Naive thymus-derived CD4-positive, alpha-beta T cell (primary cell): ENCODE measurements at regions of chr17 and their contacts with region 1.

Region 1: DNA sequence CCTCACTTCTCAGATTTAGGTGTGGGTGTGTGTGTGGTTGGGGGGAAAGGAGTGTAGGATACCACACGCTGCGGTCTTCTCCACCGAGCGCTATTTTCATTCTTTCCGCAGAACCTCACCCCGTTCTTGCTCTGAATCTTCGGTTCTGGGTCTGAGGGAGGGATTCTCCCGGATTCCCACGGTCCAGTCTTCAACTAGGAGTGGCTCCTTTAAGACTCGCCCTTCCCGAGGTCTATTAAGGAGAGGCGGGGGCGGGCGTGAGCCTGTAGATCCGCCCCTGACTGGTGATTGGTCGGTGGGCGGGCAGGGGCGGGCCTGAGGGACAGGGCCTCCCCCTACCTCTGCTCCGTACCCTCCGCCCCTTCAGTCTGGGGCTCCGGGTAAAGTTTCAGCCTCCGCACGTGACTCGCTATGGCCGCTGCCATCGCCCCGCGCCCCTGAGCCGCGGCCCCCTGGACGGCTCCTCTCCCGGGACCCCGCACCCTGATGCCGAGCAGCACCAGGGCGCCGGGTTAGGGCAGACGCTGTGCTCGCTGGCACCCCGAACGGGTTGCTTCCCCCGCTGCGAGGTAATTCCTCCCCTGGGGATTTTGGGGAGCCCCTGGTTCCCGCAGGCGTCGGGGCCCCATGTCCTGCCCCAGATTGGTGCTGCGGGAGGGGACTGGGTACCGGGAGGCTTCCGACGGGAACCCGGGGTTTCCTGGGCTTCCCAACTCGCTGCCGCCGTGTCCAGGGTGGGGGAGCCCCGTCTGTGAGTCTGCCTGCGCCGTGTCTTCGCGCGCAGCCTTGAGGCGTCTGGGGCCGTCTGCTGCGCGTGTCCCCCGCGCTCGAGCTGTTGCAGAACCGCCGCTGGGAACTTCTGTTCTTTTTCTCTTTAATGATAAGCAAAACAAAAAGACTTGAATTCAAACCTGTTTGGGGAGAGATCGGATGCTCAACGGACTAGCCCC is 9.2 kb downstream of the RARA start:
- DNase-seq: peak; percentile 81 to 91 (median 90)
- ATAC-seq: peak; percentile 76
- H3K4me3 ChIP-seq: peak overlapping the region; percentile 55
- H3K4me3 Mint-ChIP-seq: peak overlapping the region; percentile 89 to 98 (median 97)
- H3K27ac ChIP-seq: peak overlapping the region; percentile 96
- H3K27ac Mint-ChIP-seq: peak overlapping the region; percentile 98 to 100 (median 99)
- H3K4me1 ChIP-seq: peaks cover 49 to 68% of the 10 kb centered on the region in 2 donors
- H3K4me1 Mint-ChIP-seq: peaks cover 32 to 88% (median 74%) of the 10 kb centered on the region in 7 donors
- H3K27me3 ChIP-seq: no peaks in the 10 kb centered on the region
- H3K27me3 Mint-ChIP-seq: peaks cover 0 to 8% (median 0%) of the 10 kb centered on the region in 5 donors

Region 2: GRCh38 chr17:40121181-40122135 is 196.7 kb before region 1 on chr17 and contains the start of gene MSL1:
- CTCF ChIA-PET with region 1: no interaction called
- POLR2A ChIA-PET with region 1: no interaction called
- intact Hi-C with region 1: loop called in 1 of 2 experiments (anchors 5 kb)
- DNase-seq: peak; percentile 81 to 95 (median 86)
- ATAC-seq: peak; percentile 82
- H3K4me3 ChIP-seq: peak within 1 kb of the TSS; percentile 86
- H3K4me3 Mint-ChIP-seq: peak within 1 kb of the TSS; percentile 65 to 99 (median 86)
- H3K27ac ChIP-seq: peak within 1 kb of the TSS; percentile 82
- H3K27ac Mint-ChIP-seq: peak within 1 kb of the TSS; percentile 38 to 97 (median 84)
- H3K4me1 ChIP-seq: peaks cover 12 to 16% of the 10 kb centered on the region in 2 donors
- H3K4me1 Mint-ChIP-seq: peaks cover 32 to 47% (median 38%) of the 10 kb centered on the region in 7 donors
- H3K27me3 ChIP-seq: no peaks in the 10 kb centered on the region
- H3K27me3 Mint-ChIP-seq: no peaks in the 10 kb centered on the region
- total RNA-seq, gene MSL1: 97.0 to 145 (median 113) TPM

Region 3: DNA sequence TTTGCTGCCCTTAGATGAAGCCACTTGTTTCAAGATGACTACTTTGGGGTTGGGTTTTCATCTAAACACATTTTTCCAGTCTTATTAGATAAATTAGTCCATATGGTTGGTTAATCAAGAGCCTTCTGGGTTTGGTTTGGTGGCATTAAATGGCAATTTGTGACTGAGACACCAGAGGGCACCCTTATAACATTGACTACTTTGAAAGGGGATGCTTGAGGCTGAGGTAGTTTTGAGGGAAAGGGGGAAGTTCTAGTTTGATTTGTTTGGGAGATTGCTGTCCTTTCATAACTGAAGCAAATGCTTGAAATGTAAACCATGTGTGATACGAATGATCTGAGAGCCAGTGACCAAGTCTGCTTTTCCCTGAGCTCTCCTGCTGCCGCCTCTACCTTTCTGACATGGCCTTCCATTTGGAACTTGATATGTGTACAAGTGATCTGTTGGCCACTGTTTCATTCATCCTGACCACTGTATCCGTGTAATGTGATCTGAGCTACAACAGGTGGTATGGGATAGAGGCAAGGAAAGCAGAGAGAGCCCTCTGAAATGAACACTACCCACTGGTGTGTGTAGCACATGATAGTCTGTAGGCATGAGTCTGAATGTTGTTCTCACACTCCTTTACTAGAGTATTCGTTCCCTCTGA is 15.0 kb before region 1 on chr17:
- CTCF ChIA-PET with region 1: interaction called, 13 read pairs
- POLR2A ChIA-PET with region 1: interaction called, 742 read pairs
- intact Hi-C with region 1: loop called (anchors 1 kb)
- DNase-seq: peak in 7 of 9 donors; percentile 43 to 70 (median 64)
- ATAC-seq: peak; percentile 86
- H3K4me3 ChIP-seq: no peak overlapping the region
- H3K4me3 Mint-ChIP-seq: peak overlapping the region in 2 of 10 donors; percentile 8 to 44
- H3K27ac ChIP-seq: no peak overlapping the region
- H3K27ac Mint-ChIP-seq: peak overlapping the region in 7 of 9 donors; percentile 3 to 34 (median 19)
- H3K4me1 ChIP-seq: peaks cover 13 to 28% of the 10 kb centered on the region in 2 donors
- H3K4me1 Mint-ChIP-seq: peaks cover 11 to 21% (median 15%) of the 10 kb centered on the region in 7 donors
- H3K27me3 ChIP-seq: no peaks in the 10 kb centered on the region
- H3K27me3 Mint-ChIP-seq: no peaks in the 10 kb centered on the region

Region 4: DNA sequence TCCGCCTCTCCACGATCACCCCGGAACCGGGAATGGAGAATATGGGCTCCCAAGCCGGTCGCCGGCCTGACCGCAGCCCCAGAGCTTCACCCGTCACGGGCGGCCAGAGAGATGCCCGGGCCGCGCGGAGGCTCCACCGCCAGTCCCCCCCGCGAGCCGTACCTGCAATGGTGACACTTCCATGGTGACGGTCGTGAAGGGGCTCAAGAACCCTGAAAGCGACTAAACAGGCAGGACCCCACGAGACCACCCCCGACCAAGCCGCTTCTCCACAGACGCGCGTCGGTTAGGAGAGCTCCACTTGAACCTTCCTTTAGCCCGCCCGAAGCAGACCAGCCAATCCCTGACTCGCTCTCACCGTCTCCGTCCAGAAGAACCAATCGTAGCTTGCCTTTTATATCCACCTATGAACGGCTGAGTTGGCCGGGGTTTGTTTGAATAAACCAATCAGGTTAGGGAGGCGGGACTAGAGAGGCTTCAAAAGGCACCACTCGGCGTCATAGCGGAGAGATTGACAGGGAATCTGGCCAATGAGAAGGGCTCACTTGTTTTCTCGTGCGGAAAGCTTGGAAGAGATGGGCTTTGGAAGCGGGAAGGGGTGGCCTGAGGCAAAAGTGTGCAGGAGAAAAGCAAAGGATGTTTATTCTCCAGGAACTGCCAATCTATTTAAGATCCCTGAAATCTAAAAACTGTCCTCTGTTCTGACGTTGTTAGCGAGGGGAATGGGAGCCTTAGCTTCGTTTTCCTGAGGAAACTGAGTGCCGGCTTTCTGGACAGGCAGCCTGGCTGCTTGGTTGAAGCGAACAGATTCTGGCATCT is 99.7 kb after region 1 on chr17 and contains the start of gene TOP2A:
- CTCF ChIA-PET with region 1: no interaction called
- POLR2A ChIA-PET with region 1: no interaction called
- intact Hi-C with region 1: loop called in 1 of 2 experiments (anchors 5 kb)
- DNase-seq: peak; percentile 92 to 98 (median 98)
- ATAC-seq: peak; percentile 100
- H3K4me3 ChIP-seq: peak within 1 kb of the TSS; percentile 96
- H3K4me3 Mint-ChIP-seq: peak within 1 kb of the TSS; percentile 87 to 99 (median 92)
- H3K27ac ChIP-seq: peak within 1 kb of the TSS; percentile 71
- H3K27ac Mint-ChIP-seq: peak within 1 kb of the TSS; percentile 75 to 97 (median 90)
- H3K4me1 ChIP-seq: peaks cover 0 to 16% of the 10 kb centered on the region in 2 donors
- H3K4me1 Mint-ChIP-seq: peaks cover 6 to 41% (median 23%) of the 10 kb centered on the region in 7 donors
- H3K27me3 ChIP-seq: peaks cover 0 to 5% of the 10 kb centered on the region in 2 donors
- H3K27me3 Mint-ChIP-seq: peaks cover 0 to 2% (median 0%) of the 10 kb centered on the region in 5 donors
- total RNA-seq, gene TOP2A: 0.54 to 273 (median 1.2) TPM

Region 5: GRCh38 chr17:40564883-40565768 is 247.0 kb after region 1 on chr17 and contains the start of gene CCR7:
- CTCF ChIA-PET with region 1: interaction called, 3 read pairs
- POLR2A ChIA-PET with region 1: interaction called, 9 read pairs
- intact Hi-C with region 1: loop called in 1 of 2 experiments (anchors 1 kb)
- DNase-seq: peak; percentile 68 to 92 (median 86)
- ATAC-seq: peak; percentile 77
- H3K4me3 ChIP-seq: peak within 1 kb of the TSS; percentile 90
- H3K4me3 Mint-ChIP-seq: peak within 1 kb of the TSS; percentile 90 to 100 (median 98)
- H3K27ac ChIP-seq: peak within 1 kb of the TSS; percentile 99
- H3K27ac Mint-ChIP-seq: peak within 1 kb of the TSS; percentile 92 to 100 (median 100)
- H3K4me1 ChIP-seq: peaks cover 37 to 72% of the 10 kb centered on the region in 2 donors
- H3K4me1 Mint-ChIP-seq: peaks cover 29 to 57% (median 52%) of the 10 kb centered on the region in 7 donors
- H3K27me3 ChIP-seq: no peaks in the 10 kb centered on the region
- H3K27me3 Mint-ChIP-seq: peaks cover 0 to 2% (median 0%) of the 10 kb centered on the region in 5 donors
- total RNA-seq, gene CCR7: 153 to 675 (median 262) TPM

Region 6: GRCh38 chr17:41688699-41689496 is 1370.7 kb after region 1 on chr17 and contains the start of gene EIF1:
- CTCF ChIA-PET with region 1: no interaction called
- POLR2A ChIA-PET with region 1: interaction called, 5 read pairs
- intact Hi-C with region 1: loop called in 1 of 2 experiments (anchors 2 kb)
- DNase-seq: peak; percentile 98 to 100 (median 99)
- ATAC-seq: peak; percentile 85
- H3K4me3 ChIP-seq: peak within 1 kb of the TSS; percentile 86
- H3K4me3 Mint-ChIP-seq: peak within 1 kb of the TSS; percentile 90 to 99 (median 96)
- H3K27ac ChIP-seq: peak within 1 kb of the TSS; percentile 99
- H3K27ac Mint-ChIP-seq: peak within 1 kb of the TSS; percentile 98 to 99 (median 99)
- H3K4me1 ChIP-seq: peaks cover 22 to 25% of the 10 kb centered on the region in 2 donors
- H3K4me1 Mint-ChIP-seq: peaks cover 13 to 43% (median 35%) of the 10 kb centered on the region in 7 donors
- H3K27me3 ChIP-seq: no peaks in the 10 kb centered on the region
- H3K27me3 Mint-ChIP-seq: peaks cover 0 to 9% (median 0%) of the 10 kb centered on the region in 5 donors
- total RNA-seq, gene EIF1: 710 to 2,222 (median 934) TPM